A673 (cell line): ENCODE measurements at regions of chr13 and their contacts with region 1.

Region 1: GRCh38 chr13:45511310-45512097 is 46.8 kb downstream of the COG3 start:
- DNase-seq: peak; percentile 87
- H3K4me3 ChIP-seq: no peak overlapping the region
- H3K27ac ChIP-seq: no peak overlapping the region
- H3K4me1 ChIP-seq: peaks cover 21% of the 10 kb centered on the region
- H3K27me3 ChIP-seq: no peaks in the 10 kb centered on the region
- CTCF ChIP-seq: peak; percentile 84

Region 2: DNA sequence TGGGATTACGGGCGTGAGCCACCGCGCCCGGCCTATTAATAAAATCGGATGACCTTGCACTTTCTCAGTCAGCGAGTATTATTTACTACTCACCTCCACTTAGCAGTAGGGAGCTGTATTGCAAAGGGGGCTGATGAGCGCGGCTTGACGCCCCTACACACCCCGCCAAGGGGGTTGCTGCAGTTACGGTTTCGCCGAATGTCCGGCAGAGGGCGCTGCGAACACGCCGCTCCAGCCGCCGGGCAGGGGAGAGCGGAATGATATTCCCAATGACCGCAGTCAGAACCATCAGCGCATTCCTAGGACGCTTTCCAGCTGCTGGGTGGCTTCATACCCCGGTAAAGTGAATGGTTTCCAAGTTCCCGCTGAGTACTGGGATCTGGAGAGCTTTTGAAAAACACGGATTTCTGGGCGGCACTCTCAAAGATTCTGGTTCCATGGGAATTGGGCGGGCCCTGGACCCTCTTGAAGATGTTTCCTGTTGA is 140.5 kb before region 1 on chr13:
- CTCF ChIA-PET with region 1: no interaction called
- POLR2A ChIA-PET with region 1: no interaction called
- intact Hi-C with region 1: loop called (anchors 10 kb)
- DNase-seq: peak; percentile 82
- H3K4me3 ChIP-seq: no peak overlapping the region
- H3K27ac ChIP-seq: no peak overlapping the region
- H3K4me1 ChIP-seq: peaks cover 7% of the 10 kb centered on the region
- H3K27me3 ChIP-seq: no peaks in the 10 kb centered on the region
- CTCF ChIP-seq: peak; percentile 94

Region 3: DNA sequence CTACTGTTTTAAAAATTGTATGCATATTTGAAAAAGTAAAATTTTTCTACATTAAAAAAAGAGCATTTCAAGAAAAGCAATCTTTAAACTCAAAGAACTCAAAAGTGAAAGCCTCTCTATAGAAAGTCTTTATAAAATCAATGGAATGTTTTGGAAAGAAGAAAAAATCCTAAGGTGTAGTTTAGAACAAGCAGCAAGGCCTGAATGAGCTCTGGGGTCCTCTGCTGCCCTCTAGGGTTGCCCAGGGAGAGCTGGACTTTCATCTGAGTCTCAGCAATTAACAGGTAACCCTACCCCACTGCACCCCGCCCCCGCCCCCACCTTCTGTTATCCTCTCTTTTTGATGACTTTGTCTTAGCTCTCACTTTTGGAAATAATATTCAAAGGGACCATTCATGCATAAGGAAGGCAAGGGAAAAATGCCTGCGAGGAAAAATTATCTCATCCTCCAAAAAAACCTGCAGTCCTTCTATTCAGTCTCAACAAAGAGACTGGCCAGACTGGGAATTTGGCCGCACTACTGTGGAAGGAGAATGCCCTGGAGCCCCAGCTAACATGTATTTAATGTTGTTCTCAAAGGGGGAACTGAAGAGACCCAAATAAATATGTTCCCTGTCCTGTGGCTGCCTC is 117.4 kb before region 1 on chr13:
- CTCF ChIA-PET with region 1: no interaction called
- POLR2A ChIA-PET with region 1: no interaction called
- intact Hi-C with region 1: no loop called
- DNase-seq: peak; percentile 48
- H3K4me3 ChIP-seq: no peak overlapping the region
- H3K27ac ChIP-seq: no peak overlapping the region
- H3K4me1 ChIP-seq: no peaks in the 10 kb centered on the region
- H3K27me3 ChIP-seq: no peaks in the 10 kb centered on the region
- CTCF ChIP-seq: peak; percentile 60

Region 4: DNA sequence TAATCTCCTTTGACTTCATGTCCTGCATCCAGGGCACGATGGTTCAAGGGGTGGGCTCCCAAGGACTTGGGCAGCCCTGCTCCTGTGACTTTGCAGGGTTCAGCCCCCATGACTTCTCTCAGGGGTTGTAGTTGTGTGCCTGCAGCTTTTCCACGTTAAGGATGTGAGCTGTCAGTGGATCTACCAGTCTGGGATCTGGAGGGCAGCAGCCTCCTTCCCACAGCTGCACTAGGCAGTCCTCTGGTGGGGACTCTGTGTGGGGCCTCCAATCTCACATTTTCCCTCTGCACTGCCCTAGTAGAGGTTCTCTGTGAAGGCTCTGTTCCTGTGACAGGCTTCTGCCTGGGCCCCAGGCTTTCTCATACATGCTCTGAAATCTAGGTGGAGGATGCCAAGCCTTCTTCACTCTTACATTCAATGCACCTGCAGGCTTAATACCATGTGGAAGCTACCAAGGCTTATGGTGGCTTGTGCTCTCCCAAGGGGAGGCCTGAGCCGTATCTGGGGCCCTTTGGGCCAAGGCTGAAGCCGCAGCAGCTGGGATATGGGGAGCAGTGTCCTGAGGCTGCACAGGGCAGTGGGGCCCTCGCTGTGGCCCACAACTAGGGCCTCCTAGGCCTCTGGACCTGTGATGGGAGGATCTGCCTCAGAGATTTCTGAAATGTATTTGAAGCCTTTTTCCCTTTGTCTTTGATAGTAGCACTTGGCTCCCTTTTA is 143.3 kb after region 1 on chr13:
- CTCF ChIA-PET with region 1: no interaction called
- POLR2A ChIA-PET with region 1: no interaction called
- intact Hi-C with region 1: no loop called
- DNase-seq: no peak
- H3K4me3 ChIP-seq: no peak overlapping the region
- H3K27ac ChIP-seq: no peak overlapping the region
- H3K4me1 ChIP-seq: no peaks in the 10 kb centered on the region
- H3K27me3 ChIP-seq: no peaks in the 10 kb centered on the region
- CTCF ChIP-seq: no peak

Region 5: DNA sequence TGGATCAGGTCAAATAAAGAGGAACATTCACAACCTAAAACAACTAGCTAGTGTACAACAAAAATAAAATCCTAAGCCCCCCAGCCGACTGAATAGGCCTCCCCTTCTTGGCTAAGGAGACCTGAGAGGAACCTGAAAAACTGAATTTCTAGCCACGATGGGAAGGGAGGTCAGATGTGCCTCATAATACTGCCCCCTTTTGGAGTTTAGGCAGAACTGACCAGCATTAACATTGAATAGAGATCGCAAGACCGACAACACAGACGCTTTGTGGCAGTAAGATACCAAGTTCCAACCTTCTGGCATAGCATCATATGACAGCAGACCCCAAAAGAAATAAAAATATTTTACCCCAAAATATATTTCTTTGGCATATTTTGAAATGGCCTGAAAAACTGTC is 206.6 kb after region 1 on chr13:
- CTCF ChIA-PET with region 1: no interaction called
- POLR2A ChIA-PET with region 1: no interaction called
- intact Hi-C with region 1: loop called (anchors 5 kb)
- DNase-seq: peak; percentile 60
- H3K4me3 ChIP-seq: no peak overlapping the region
- H3K27ac ChIP-seq: no peak overlapping the region
- H3K4me1 ChIP-seq: peaks cover 14% of the 10 kb centered on the region
- H3K27me3 ChIP-seq: no peaks in the 10 kb centered on the region
- CTCF ChIP-seq: peak; percentile 75